Activated naive CD4-positive, alpha-beta T cell treated with anti-CD3 and anti-CD28 coated beads for 36 hours (primary cell): ENCODE measurements at regions of chr2 and their contacts with region 1.

Region 1: GRCh38 chr2:55133467-55134315 is 83.4 kb upstream of the RTN4 start:
- DNase-seq: peak; percentile 80
- H3K4me3 Mint-ChIP-seq: peak overlapping the region; percentile 75
- H3K27ac Mint-ChIP-seq: peak overlapping the region; percentile 95
- H3K4me1 Mint-ChIP-seq: peaks cover 25% of the 10 kb centered on the region
- H3K27me3 Mint-ChIP-seq: no peaks in the 10 kb centered on the region

Region 2: GRCh38 chr2:54387059-54387991 is 746.4 kb before region 1 on chr2:
- CTCF ChIA-PET with region 1: no interaction called
- intact Hi-C with region 1: no loop called
- DNase-seq: no peak
- H3K4me3 Mint-ChIP-seq: no peak overlapping the region
- H3K27ac Mint-ChIP-seq: no peak overlapping the region
- H3K4me1 Mint-ChIP-seq: no peaks in the 10 kb centered on the region
- H3K27me3 Mint-ChIP-seq: no peaks in the 10 kb centered on the region

Region 3: GRCh38 chr2:55099878-55100820 is 33.5 kb before region 1 on chr2:
- CTCF ChIA-PET with region 1: interaction called, 3 read pairs
- intact Hi-C with region 1: loop called (anchors 1 kb)
- DNase-seq: no peak
- H3K4me3 Mint-ChIP-seq: no peak overlapping the region
- H3K27ac Mint-ChIP-seq: peak overlapping the region; percentile 79
- H3K4me1 Mint-ChIP-seq: peaks cover 16% of the 10 kb centered on the region
- H3K27me3 Mint-ChIP-seq: no peaks in the 10 kb centered on the region

Region 4: DNA sequence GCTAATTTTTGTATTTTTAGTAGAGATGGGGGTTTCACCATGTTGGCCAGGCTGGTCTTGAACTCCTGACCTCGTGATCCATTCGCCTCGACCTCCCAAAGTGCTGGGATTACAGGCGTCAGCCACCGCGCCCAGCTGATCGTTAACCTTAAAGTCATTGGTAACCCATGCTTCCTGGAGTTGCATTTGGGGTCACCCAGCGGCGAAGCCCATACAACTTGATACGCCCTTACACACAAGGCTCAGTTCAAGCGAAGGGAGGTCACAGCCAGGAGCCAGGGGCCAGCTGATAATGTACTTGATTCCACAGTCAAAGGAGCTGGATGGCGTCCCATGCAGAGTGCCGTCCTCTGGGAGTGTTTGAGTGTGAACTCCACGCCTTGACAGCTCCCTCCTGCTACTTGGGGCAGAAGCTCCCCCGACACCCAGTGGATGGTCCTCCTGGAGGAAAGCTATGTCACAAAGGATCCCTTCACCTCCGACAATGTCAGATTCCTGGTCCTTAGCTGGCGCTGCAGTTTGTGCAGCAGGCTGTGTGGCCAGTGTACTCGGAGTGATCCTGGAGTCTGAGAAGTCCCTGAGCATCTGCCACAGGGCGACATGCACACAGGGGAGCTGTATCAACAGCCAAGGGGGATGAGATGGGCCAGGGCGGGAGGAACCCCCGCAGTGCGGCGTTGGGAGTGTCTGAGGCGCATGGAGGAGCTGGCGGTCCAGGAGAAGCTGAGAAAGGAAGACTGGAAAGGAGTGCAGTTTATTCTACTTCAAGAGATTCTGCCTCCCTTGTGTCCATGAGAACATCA is 90.5 kb after region 1 on chr2:
- CTCF ChIA-PET with region 1: no interaction called
- intact Hi-C with region 1: loop called (anchors 2 kb)
- DNase-seq: no peak
- H3K4me3 Mint-ChIP-seq: peak overlapping the region; percentile 71
- H3K27ac Mint-ChIP-seq: peak overlapping the region; percentile 68
- H3K4me1 Mint-ChIP-seq: peaks cover 36% of the 10 kb centered on the region
- H3K27me3 Mint-ChIP-seq: no peaks in the 10 kb centered on the region